Posterior vena cava (tissue), 2 donors: ENCODE measurements at regions of chr10 and their contacts with region 1.

Region 1: DNA sequence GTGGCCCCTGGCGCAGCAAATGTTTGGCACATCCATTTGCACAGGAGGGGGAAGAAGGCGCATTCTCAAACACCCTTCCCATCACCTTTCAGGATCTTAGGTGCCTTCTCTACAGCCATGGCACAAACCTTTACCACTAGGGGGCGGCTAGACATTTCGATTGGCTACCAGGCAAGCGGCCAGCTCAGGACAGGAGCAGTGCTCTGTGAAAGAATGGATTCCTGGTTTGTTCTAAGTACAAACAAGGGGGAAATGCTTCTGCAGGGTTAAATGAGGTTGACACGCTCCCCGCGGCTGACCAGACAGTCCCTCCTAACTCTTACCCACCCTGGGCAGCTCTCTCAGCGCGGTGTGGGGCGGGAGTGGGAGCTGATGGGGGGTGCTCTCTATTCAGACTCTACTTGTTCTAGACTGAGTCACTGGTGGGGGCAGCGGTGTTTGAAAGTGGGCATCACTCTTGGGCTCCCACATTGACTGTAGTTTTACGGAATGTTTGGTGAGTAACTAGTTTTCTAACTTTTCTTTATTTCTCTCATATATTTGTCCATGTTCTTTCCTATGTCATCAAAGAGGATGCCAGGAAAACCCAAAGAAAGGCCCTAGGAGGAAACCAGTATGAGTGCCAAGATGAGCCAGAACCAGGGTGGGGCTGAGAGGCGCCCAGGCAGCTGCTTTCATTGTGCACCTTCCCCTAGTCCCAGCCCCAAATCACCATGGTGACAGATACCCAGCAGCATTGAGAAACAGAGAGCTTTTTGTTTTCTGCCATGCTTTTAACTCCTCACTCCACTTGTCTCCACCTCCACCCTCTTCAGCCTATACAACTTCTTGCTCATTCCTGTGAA is 61.4 kb upstream of the GPR158 start:
- DNase-seq: peak; percentile 85

Region 2: GRCh38 chr10:24901686-24902399 is 211.6 kb before region 1 on chr10:
- intact Hi-C with region 1: no loop called
- DNase-seq: no peak

Region 3: GRCh38 chr10:25047591-25048301 is 65.7 kb before region 1 on chr10:
- intact Hi-C with region 1: loop called in 1 of 2 experiments (anchors 2 kb)
- DNase-seq: no peak